Caco-2 (cell line): ENCODE measurements at regions of chr3 and their contacts with region 1.

Region 1: GRCh38 chr3:130892759-130893375 is 1.0 kb upstream of the ATP2C1 start:
- DNase-seq: peak; percentile 60 to 69
- H3K4me3 ChIP-seq: peak overlapping the region; percentile 93
- H3K4me3 Mint-ChIP-seq: peak overlapping the region; percentile 90
- H3K27ac Mint-ChIP-seq: peak overlapping the region; percentile 94
- H3K4me1 ChIP-seq: peaks cover 14% of the 10 kb centered on the region
- H3K4me1 Mint-ChIP-seq: peaks cover 19% of the 10 kb centered on the region
- H3K27me3 ChIP-seq: no peaks in the 10 kb centered on the region
- H3K27me3 Mint-ChIP-seq: no peaks in the 10 kb centered on the region
- CTCF ChIP-seq: peak; percentile 64 to 77

Region 2: GRCh38 chr3:130276203-130276803 is 616.6 kb before region 1 on chr3:
- CTCF ChIA-PET with region 1: no interaction called
- POLR2A ChIA-PET with region 1: no interaction called
- intact Hi-C with region 1: loop called (anchors 10 kb)
- DNase-seq: peak in 1 of 2 experiments; percentile 39
- H3K4me3 ChIP-seq: no peak overlapping the region
- H3K4me3 Mint-ChIP-seq: no peak overlapping the region
- H3K27ac Mint-ChIP-seq: no peak overlapping the region
- H3K4me1 ChIP-seq: no peaks in the 10 kb centered on the region
- H3K4me1 Mint-ChIP-seq: no peaks in the 10 kb centered on the region
- H3K27me3 ChIP-seq: no peaks in the 10 kb centered on the region
- H3K27me3 Mint-ChIP-seq: peaks cover 8% of the 10 kb centered on the region
- CTCF ChIP-seq: peak; percentile 64 to 90

Region 3: DNA sequence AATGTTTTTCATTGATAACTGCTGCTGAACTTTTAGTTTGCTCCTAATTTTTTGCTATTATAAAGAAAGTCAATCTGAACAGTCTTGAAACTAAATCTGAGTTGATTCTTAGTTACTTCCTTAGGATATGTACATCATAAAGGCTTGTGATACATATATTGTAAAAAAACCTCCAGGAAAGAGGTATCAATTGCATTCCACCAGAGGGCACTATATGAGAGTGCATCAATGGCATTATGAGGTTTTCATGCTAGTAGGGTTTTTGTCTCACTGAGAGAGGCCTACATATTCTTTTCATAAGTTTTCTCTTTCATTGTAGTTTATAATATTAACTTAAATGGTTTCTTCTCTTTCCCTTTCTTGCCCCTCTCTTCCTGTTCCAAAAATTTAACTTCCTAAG is 193.1 kb before region 1 on chr3:
- CTCF ChIA-PET with region 1: interaction called, 3 read pairs
- POLR2A ChIA-PET with region 1: no interaction called
- intact Hi-C with region 1: loop called (anchors 1 kb)
- DNase-seq: peak in 1 of 2 experiments; percentile 27
- H3K4me3 ChIP-seq: no peak overlapping the region
- H3K4me3 Mint-ChIP-seq: no peak overlapping the region
- H3K27ac Mint-ChIP-seq: no peak overlapping the region
- H3K4me1 ChIP-seq: 0 out of 2 replicates have a peak, but pooled peaks cover 4% of the 10 kb centered on the region
- H3K4me1 Mint-ChIP-seq: peaks cover 12% of the 10 kb centered on the region
- H3K27me3 ChIP-seq: no peaks in the 10 kb centered on the region
- H3K27me3 Mint-ChIP-seq: no peaks in the 10 kb centered on the region
- CTCF ChIP-seq: peak in 1 of 2 experiments; percentile 73

Region 4: DNA sequence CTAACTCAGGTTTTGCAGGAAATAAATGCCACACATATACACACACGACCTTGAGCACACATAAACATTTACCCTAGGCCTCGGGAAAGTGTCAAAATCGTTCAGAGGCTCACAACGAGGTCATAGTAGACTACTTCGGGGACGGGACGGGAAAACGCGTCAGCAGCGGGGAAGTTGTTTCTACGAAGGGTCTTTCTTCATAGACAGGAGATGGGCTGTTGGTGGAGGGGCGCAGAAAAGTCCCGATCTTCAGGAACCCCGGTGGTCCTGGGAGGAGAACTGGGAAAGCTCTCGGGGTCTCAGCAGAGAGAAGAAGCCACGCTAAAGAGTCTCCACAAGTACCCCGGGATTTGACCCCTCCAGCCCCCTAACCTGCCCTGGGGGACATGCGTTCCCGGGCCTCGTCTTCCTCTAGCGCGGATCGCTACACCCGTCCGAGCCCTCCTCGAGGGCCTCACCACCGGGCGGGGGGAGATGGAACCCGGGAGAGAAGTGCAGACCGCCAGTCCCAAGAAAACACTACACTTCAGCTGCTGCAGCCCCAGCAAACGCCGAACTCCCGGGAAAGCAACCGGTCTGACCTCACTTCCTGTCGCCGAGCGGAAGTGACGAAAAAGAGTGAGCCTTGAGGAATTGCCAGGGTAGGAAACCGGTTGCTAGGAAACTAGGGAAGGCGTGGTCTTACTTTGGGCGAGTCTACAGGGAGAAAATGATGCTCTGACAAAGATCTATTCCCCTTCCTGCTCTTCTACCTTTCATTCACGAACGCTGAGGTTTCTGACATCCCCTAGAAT is 146.4 kb before region 1 on chr3 and contains the start of gene PIK3R4:
- CTCF ChIA-PET with region 1: no interaction called
- POLR2A ChIA-PET with region 1: interaction called, 6 read pairs
- intact Hi-C with region 1: loop called (anchors 1 kb)
- DNase-seq: peak; percentile 96 to 98
- H3K4me3 ChIP-seq: peak within 1 kb of the TSS; percentile 86
- H3K4me3 Mint-ChIP-seq: no peak within 1 kb of the TSS
- H3K27ac Mint-ChIP-seq: peak within 1 kb of the TSS; percentile 96
- H3K4me1 ChIP-seq: peaks cover 6% of the 10 kb centered on the region
- H3K4me1 Mint-ChIP-seq: peaks cover 8% of the 10 kb centered on the region
- H3K27me3 ChIP-seq: no peaks in the 10 kb centered on the region
- H3K27me3 Mint-ChIP-seq: peaks cover 2% of the 10 kb centered on the region
- CTCF ChIP-seq: no peak
- total RNA-seq, gene PIK3R4: 20.0 and 23.1 TPM in 2 replicates

Region 5: GRCh38 chr3:130759699-130760338 is 133.0 kb before region 1 on chr3:
- CTCF ChIA-PET with region 1: interaction called, 7 read pairs
- POLR2A ChIA-PET with region 1: no interaction called
- intact Hi-C with region 1: loop called (anchors 1 kb)
- DNase-seq: peak; percentile 34 to 65
- H3K4me3 ChIP-seq: no peak overlapping the region
- H3K4me3 Mint-ChIP-seq: no peak overlapping the region
- H3K27ac Mint-ChIP-seq: no peak overlapping the region
- H3K4me1 ChIP-seq: no peaks in the 10 kb centered on the region
- H3K4me1 Mint-ChIP-seq: no peaks in the 10 kb centered on the region
- H3K27me3 ChIP-seq: no peaks in the 10 kb centered on the region
- H3K27me3 Mint-ChIP-seq: no peaks in the 10 kb centered on the region
- CTCF ChIP-seq: peak; percentile 71 to 72

Region 6: DNA sequence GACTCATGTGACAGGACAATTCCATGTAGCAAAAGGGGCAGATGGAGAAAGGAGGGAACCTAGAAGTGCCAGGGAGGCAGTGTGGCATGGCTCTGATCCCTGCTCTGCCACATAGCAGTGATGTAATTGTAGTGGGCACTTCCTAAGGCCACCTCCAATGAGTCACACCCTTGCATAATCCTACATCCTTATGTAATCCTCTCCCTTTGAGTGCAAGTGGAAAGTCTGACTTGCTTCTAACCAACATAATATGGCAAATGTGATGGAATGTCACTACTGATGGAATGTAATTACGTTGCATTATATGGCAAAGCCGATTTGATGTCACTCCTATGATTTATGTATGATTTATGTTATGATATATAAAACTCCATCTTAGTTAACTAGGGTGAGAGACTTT is 71.9 kb before region 1 on chr3:
- CTCF ChIA-PET with region 1: no interaction called
- POLR2A ChIA-PET with region 1: no interaction called
- intact Hi-C with region 1: no loop called
- DNase-seq: no peak
- H3K4me3 ChIP-seq: no peak overlapping the region
- H3K4me3 Mint-ChIP-seq: no peak overlapping the region
- H3K27ac Mint-ChIP-seq: no peak overlapping the region
- H3K4me1 ChIP-seq: peaks cover 2% of the 10 kb centered on the region; the same call in 1 of the 2 replicates
- H3K4me1 Mint-ChIP-seq: no peaks in the 10 kb centered on the region
- H3K27me3 ChIP-seq: no peaks in the 10 kb centered on the region
- H3K27me3 Mint-ChIP-seq: peaks cover 4% of the 10 kb centered on the region
- CTCF ChIP-seq: no peak

Region 7: DNA sequence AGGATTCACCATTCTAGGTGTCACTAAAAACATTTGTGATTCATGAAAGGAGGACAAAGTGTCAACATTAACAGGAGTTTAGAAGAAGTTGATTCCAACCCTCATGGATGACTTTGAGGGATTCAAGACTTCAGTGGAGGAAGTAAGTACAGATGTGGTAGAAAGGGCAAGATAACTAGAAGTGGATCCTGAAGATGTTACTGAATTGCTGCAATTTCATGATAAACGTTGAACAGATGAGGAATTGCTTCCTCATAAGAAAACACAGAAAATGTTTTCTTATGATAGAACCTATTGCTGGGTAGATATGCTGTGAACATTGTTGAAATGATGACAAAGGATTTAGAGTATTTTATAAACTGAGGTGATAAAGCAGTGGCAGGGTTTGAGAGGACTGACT is 22.4 kb before region 1 on chr3:
- CTCF ChIA-PET with region 1: no interaction called
- POLR2A ChIA-PET with region 1: no interaction called
- intact Hi-C with region 1: no loop called
- DNase-seq: no peak
- H3K4me3 ChIP-seq: no peak overlapping the region
- H3K4me3 Mint-ChIP-seq: no peak overlapping the region
- H3K27ac Mint-ChIP-seq: no peak overlapping the region
- H3K4me1 ChIP-seq: no peaks in the 10 kb centered on the region
- H3K4me1 Mint-ChIP-seq: no peaks in the 10 kb centered on the region
- H3K27me3 ChIP-seq: no peaks in the 10 kb centered on the region
- H3K27me3 Mint-ChIP-seq: peaks cover 3% of the 10 kb centered on the region
- CTCF ChIP-seq: no peak

Region 8: DNA sequence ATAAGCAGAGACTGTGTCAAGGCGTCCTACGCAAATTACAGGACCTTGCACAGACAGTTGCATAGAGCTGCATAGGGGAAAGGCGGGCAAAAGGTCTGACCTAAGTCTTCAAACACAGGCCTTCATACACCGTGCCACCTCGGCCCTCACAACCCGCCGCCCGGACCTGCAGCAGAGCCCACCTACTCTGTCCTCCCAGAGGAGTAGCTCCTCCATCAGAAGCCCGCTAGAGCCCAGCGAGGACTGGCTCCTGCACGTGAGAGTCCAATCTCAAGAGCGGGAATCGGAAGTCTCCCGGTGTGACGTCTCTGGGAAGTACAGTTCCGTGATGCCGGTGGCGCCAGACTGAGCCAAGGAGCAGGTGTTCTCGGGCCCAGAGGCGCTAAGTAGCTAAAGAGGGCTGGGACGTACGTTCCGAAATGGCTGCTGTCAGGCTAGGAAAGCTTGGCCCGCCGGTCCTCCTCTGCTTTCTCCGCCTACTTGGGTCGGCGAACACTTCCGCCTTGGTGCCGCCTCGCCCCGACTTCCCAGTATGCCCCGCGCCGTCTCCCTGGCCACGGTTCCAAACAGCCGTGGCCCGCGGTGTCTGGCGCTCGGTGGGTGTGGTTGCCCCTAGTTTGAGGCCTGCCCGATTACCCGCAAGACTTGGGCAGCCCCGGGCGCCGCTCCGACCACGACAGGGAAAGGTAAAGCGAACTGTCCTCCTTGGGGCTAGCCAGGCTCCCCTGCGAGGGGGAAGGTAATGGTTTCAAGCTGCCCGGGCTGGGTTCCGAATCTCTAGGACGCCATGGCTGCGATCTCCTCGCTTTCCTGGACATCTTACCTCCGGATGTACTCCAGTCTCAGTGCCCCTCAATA is 133.7 kb after region 1 on chr3 and contains the starts of genes ASTE1 and NEK11:
- CTCF ChIA-PET with region 1: no interaction called
- POLR2A ChIA-PET with region 1: interaction called, 6 read pairs
- intact Hi-C with region 1: loop called (anchors 1 kb)
- DNase-seq: peak; percentile 88 to 92
- H3K4me3 ChIP-seq: peak within 1 kb of the TSS; percentile 60
- H3K4me3 Mint-ChIP-seq: peak within 1 kb of the TSS; percentile 82
- H3K27ac Mint-ChIP-seq: peak within 1 kb of the TSS; percentile 95
- H3K4me1 ChIP-seq: peaks cover 19% of the 10 kb centered on the region; the same call in 1 of the 2 replicates
- H3K4me1 Mint-ChIP-seq: peaks cover 23% of the 10 kb centered on the region
- H3K27me3 ChIP-seq: no peaks in the 10 kb centered on the region
- H3K27me3 Mint-ChIP-seq: no peaks in the 10 kb centered on the region
- CTCF ChIP-seq: no peak
- total RNA-seq, gene ASTE1: 8.7 and 11.0 TPM in 2 replicates
- total RNA-seq, gene NEK11: 3.9 and 4.4 TPM in 2 replicates